Left cardiac atrium (tissue), 4 donors: ENCODE measurements at regions of chr2 and their contacts with region 1.

Region 1: GRCh38 chr2:176653479-176654443 is 384.5 kb downstream of the MTX2 start:
- DNase-seq: peak; percentile 52
- ATAC-seq: peak; percentile 88 to 91

Region 2: DNA sequence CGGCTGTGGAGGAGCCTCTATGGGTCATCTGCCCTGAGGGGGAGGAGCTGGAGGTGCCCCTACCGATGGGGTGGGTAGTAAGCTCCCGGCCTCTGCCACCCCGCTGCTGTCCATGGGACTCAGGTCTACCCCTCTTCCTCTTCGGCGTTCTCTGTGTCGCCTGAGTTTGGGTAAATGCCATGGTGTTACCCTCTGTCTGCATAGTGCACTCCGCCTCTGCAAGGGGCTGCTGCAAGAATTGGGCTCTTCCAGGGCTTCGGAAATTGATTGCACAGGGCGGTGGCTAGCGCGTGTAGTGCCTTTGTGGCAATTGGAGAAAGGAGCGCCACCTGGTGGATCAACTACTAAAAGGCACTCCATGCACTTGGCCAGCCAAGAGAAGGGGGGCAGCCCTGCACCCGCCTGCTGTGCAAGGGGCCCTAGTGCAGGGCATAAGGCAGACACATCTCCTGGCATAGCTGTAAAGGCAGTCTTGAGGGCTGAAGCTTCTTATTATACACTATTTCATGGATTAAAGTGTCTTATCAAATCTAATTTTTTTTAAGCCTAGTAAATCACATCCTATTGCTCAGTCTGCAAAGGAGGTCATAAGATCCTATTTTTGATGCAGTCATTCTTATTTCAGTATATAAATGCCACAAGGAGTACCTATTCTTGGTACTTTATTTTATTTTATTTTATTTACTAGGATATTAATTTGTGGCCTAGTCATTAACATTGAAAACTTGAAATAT is 1109.9 kb after region 1 on chr2:
- intact Hi-C with region 1: loop called in 1 of 2 experiments (anchors 5 kb)
- DNase-seq: peak; percentile 84
- ATAC-seq: peak; percentile 85 to 90